ENCODE measurements at regions of chr17 and their contacts with region 1.

Region 1: DNA sequence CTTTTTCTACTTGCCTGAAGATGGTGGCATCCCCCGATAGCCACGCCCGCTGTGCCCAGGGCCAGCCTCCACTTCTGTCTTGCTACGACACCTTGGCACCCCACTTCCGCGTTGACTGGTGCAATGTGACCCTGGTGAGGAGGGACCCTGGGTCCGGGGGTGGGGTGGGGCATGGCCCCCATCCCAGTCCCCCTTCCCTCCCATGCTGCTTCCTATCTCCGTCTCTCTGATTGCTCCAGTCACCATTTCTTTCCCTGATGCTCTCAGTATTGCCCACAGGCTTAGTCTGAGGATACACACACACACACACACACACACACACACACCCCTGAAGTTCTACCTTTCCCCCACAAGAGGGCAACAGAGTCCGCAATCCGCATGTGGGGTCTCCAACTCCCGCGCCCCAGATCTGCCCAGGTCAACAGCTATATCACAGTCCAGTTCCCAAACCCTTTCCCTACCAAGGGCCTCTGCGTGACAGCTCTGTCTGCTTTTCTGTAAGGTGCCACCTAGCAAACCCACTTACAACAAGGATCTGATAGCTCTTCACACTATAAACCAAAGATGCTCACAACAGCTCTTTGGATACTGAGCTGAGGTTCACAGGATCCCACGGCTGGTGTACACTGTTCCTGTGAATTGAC is 3.4 kb downstream of the SGCA start:
- H3K4me3 ChIP-seq: no peak overlapping the region
- H3K27ac ChIP-seq: no peak overlapping the region
- H3K4me1 ChIP-seq: no peaks in the 10 kb centered on the region
- CTCF ChIP-seq: peak; percentile 98

Region 2: GRCh38 chr17:49809056-49809455 is 360.2 kb before region 1 on chr17:
- CTCF ChIA-PET with region 1: no interaction called
- POLR2A ChIA-PET with region 1: no interaction called
- H3K4me3 ChIP-seq: no peak overlapping the region
- H3K27ac ChIP-seq: no peak overlapping the region
- H3K4me1 ChIP-seq: no peaks in the 10 kb centered on the region
- CTCF ChIP-seq: no peak

Region 3: DNA sequence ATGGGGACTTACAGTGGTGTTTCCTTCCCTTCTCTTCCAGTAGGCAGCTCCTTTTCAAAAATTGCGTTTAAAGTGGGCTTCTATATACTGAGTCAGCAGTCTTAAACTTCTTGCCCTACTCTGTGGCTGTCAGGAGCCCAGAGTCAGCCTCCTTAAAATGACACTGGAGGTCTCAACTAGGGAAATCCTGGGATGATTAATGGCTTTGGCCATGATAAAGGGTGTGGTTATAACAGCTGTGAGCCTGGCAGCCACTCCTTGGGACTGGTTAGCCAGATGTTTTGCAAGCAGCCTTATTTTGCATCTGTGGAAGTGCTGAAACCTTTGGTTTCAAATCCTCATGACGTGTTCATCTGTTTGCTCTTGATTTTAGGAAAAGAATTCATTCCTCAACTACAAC is 346.4 kb before region 1 on chr17:
- CTCF ChIA-PET with region 1: no interaction called
- POLR2A ChIA-PET with region 1: no interaction called
- H3K4me3 ChIP-seq: no peak overlapping the region
- H3K27ac ChIP-seq: no peak overlapping the region
- H3K4me1 ChIP-seq: no peaks in the 10 kb centered on the region
- CTCF ChIP-seq: no peak

Region 4: GRCh38 chr17:50114849-50115357 is 54.3 kb before region 1 on chr17:
- CTCF ChIA-PET with region 1: interaction called, 10 read pairs
- POLR2A ChIA-PET with region 1: interaction called, 3 read pairs
- H3K4me3 ChIP-seq: no peak overlapping the region
- H3K27ac ChIP-seq: no peak overlapping the region
- H3K4me1 ChIP-seq: no peaks in the 10 kb centered on the region; the same call in 1 of the 2 replicates
- CTCF ChIP-seq: peak; percentile 58

Region 5: GRCh38 chr17:50123649-50124349 is 45.4 kb before region 1 on chr17:
- CTCF ChIA-PET with region 1: interaction called, 12 read pairs
- POLR2A ChIA-PET with region 1: interaction called, 3 read pairs
- H3K4me3 ChIP-seq: no peak overlapping the region
- H3K27ac ChIP-seq: peak overlapping the region; percentile 60
- H3K4me1 ChIP-seq: peaks cover 13% of the 10 kb centered on the region
- CTCF ChIP-seq: no peak

Region 6: GRCh38 chr17:50151041-50151936 is 18.0 kb before region 1 on chr17:
- CTCF ChIA-PET with region 1: interaction called, 12 read pairs
- POLR2A ChIA-PET with region 1: interaction called, 10 read pairs
- H3K4me3 ChIP-seq: peak overlapping the region; percentile 77
- H3K27ac ChIP-seq: peak overlapping the region; percentile 93
- H3K4me1 ChIP-seq: peaks cover 15% of the 10 kb centered on the region
- CTCF ChIP-seq: peak; percentile 67

Region 7: DNA sequence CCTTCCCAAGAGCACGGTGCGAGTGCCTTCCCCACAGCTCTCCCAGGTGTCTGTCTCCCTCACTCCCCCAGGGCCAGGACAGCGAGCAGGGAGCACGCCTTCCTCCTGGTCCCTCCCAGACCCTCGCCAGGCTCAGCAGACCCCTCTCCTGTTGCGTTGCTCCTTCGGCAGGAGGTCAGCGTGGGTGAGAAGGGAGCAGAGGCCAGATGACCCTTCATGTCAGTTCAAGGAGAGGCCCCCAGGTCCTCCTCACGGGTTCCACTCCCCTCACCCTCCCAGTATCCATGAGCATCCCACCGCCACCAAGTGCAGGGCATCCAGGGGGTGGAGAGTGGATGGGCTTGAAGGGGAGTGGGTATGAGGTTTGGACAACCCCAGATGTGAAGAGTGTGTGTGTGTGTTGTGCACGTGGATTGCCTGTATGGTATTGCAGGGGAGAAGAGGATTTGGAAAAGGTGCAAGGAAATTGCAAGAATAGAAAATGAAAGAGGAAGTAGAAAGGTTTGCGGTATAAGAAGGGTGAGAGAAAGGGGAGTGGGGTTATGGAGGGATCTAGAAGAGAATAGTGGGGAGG is 14.3 kb after region 1 on chr17:
- CTCF ChIA-PET with region 1: interaction called, 83 read pairs
- POLR2A ChIA-PET with region 1: interaction called, 10 read pairs
- H3K4me3 ChIP-seq: no peak overlapping the region
- H3K27ac ChIP-seq: no peak overlapping the region
- H3K4me1 ChIP-seq: peaks cover 3% of the 10 kb centered on the region
- CTCF ChIP-seq: no peak

Region 8: DNA sequence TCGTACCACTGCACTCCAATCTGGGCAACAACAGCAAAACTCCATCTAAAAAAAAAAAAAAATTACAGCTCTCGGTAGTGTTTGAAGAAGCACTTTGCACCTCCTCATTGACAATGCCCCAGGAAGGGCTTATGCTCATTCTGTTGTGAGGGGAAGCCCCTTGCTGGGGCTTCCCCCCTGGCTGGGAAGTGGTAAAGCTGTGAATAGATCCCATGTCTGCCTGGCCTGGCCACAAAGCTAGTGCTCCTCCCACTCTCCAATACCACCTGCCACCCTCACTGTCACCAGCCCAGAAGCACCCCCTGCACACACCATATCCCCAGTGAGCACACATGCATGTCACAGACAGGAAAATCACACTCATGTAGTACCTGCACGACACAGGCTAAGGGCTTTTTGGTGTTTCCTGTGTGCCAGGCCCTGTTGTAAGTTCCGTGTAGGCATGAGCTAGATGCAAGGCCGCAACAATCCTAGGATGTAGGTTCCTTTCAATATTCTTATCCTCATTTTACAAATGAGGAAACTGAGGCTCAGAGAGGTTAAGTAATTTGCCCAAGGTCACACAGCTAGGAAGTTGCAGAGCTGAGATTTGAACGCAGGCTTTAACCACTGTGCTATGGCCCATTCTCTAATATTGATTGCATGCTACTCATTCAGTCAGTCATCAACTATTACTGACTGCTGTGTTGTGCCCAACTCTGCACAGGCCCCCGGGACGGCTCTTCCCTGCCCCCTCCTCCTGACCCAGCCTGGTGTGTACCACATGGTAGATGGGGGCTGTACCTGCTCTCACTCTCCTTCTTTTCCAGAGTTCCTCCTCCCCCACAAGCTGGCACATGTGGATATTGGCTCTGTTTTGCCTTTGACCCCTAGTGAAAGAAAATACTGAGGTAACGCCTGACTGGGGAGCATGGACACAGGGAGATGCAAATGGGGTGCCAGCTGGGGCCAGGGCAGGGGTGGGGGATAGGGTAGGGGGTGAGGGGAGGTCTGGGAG is 44.1 kb after region 1 on chr17:
- CTCF ChIA-PET with region 1: interaction called, 15 read pairs
- POLR2A ChIA-PET with region 1: no interaction called
- H3K4me3 ChIP-seq: no peak overlapping the region
- H3K27ac ChIP-seq: no peak overlapping the region
- H3K4me1 ChIP-seq: peaks cover 6% of the 10 kb centered on the region; the same call in 1 of the 2 replicates
- CTCF ChIP-seq: peak; percentile 44; the same call in 1 of the 2 replicates

Region 9: GRCh38 chr17:50269477-50270434 is 100.5 kb after region 1 on chr17:
- CTCF ChIA-PET with region 1: interaction called, 29 read pairs
- POLR2A ChIA-PET with region 1: interaction called, 3 read pairs
- H3K4me3 ChIP-seq: no peak overlapping the region
- H3K27ac ChIP-seq: no peak overlapping the region
- H3K4me1 ChIP-seq: peaks cover 12% of the 10 kb centered on the region
- CTCF ChIP-seq: peak; percentile 31; the same call in 1 of the 2 replicates